Cardiac septum (tissue), 1 donor: ENCODE measurements at regions of chr2 and their contacts with region 1.

Region 1: DNA sequence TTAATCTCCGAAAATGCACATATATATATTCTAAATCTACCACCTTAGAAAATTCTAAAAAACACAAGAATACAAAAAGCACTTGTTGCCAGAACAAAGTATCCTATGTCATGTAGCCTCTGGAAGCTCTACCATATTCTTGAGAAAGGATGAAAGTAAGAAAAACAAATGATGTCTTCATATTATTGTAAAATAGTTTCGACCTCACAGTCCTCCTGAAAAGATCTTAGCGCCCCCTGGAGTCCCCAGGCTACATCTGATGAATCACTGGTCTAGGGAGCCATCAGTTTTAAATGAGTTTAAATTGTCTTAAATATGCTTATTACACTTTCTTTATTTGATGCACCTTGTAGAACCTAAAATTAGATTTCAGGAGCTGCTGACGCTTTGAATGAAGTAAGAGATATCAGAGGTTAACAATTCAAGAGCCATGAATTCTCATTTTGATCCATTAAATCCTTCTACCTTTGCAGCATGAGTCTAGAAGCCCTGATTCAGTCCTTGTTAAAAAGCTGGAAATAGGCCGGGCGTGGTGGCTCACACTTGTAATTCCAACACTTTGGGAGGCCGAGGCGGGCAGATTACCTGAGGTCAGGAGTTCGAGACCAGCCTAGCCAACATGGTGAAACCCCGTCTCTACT is 138.8 kb downstream of the MCFD2 start:
- DNase-seq: no peak

Region 2: GRCh38 chr2:46650556-46651001 is 126.2 kb before region 1 on chr2:
- intact Hi-C with region 1: loop called (anchors 5 kb)
- DNase-seq: no peak

Region 3: GRCh38 chr2:46818121-46818888 is 41.5 kb after region 1 on chr2:
- intact Hi-C with region 1: loop called (anchors 1 kb)
- DNase-seq: peak; percentile 91